ENCODE measurements at regions of chr9 and their contacts with region 1.

Region 1: GRCh38 chr9:108554831-108555230 is 301.0 kb downstream of the ACTL7B start:
- DNase-seq: no peak
- H3K4me3 ChIP-seq: no peak overlapping the region
- H3K27ac ChIP-seq: no peak overlapping the region
- H3K4me1 ChIP-seq: peaks cover 28% of the 10 kb centered on the region
- H3K27me3 ChIP-seq: no peaks in the 10 kb centered on the region

Region 2: DNA sequence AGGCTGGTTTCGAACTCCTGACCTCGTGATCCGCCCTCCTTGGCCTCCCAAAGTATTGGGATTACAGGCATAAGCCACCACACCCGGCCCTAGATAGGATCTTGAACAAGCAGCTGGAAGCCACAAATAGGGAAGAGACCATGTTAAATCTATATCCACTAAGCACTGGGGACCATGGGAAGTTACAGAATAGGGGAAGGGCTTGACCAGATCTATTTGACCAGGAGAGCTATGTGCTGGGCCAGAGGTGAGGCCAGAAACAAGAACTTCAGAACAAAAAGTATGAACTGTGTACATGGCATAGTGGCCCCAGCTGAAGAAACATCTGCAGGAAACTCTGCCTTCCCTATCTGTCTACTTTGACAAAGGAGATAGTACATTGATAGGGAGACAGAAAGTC is 1076.0 kb before region 1 on chr9:
- in situ Hi-C with region 1: loop called (anchors 5 kb)
- DNase-seq: no peak
- H3K4me3 ChIP-seq: no peak overlapping the region
- H3K27ac ChIP-seq: no peak overlapping the region
- H3K4me1 ChIP-seq: peaks cover 13% of the 10 kb centered on the region
- H3K27me3 ChIP-seq: no peaks in the 10 kb centered on the region

Region 3: DNA sequence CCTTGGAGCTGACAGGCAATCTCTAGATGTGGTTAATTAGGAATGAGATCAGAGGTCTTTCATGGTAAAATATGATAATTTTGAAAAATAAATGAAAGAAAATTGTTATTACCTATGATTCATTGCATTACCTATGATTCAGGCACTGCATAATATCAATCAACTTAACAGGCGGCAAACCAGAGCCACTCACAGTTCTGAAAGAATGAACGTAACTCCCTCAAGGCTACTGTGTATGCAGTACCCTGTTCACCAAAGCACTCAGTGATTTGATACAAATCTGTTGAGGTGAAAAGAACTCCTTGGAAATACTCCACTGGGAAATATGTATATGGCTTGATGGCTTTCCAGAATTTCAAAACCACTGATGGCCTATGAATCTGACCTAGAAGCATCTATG is 97.9 kb before region 1 on chr9:
- in situ Hi-C with region 1: no loop called
- DNase-seq: no peak
- H3K4me3 ChIP-seq: no peak overlapping the region
- H3K27ac ChIP-seq: no peak overlapping the region
- H3K4me1 ChIP-seq: peaks cover 10% of the 10 kb centered on the region; the same call in 1 of the 2 replicates
- H3K27me3 ChIP-seq: no peaks in the 10 kb centered on the region

Region 4: DNA sequence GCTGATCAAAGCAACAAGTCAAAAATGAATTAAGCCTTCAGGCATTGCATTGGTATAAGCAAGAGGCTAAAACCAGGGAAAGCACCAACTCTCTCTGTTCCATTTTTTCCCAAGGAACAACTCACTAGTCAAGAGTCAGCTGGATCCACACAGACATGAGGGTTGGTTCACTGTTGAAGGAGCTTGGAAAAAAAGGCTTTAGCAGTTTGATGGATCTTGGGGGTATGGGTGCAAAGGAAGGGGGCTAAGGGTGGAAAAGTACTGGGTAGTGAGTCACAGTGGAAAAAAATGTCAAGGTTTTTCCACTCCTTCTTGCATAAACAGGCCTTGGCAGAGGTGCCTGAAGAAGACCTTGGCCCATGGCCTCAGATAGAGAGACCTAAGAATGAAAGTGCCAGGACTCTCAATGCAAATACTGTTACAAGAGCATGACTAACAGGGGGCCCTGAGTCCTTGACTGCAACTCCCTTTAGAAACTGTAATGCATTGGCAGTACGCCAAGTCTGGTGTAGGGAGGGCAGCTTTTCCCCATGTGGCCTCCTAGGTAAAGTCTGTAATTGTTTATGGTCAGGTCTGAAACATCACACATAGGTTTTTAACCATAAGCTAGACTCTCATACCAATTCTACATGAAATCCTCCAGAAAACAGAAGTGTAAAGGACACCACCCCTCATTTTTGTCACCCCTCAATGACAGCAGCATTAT is 331.0 kb after region 1 on chr9:
- in situ Hi-C with region 1: no loop called
- DNase-seq: peak; percentile 76
- H3K4me3 ChIP-seq: no peak overlapping the region
- H3K27ac ChIP-seq: no peak overlapping the region
- H3K4me1 ChIP-seq: 0 out of 2 replicates have a peak, but pooled peaks cover 8% of the 10 kb centered on the region
- H3K27me3 ChIP-seq: no peaks in the 10 kb centered on the region